WTC11 (cell line): ENCODE measurements at regions of chr16 and their contacts with region 1.

Region 1: GRCh38 chr16:69930117-69930776 is 20.9 kb upstream of the CLEC18A start:
- DNase-seq: peak; percentile 71
- ATAC-seq: peak; percentile 82
- H3K4me3 Mint-ChIP-seq: no peak overlapping the region
- H3K27ac Mint-ChIP-seq: no peak overlapping the region
- H3K4me1 Mint-ChIP-seq: peaks cover 26% of the 10 kb centered on the region
- H3K27me3 Mint-ChIP-seq: no peaks in the 10 kb centered on the region
- CTCF ChIP-seq: peak; percentile 78

Region 2: GRCh38 chr16:69223882-69224281 is 706.4 kb before region 1 on chr16:
- CTCF ChIA-PET with region 1: no interaction called
- POLR2A ChIA-PET with region 1: no interaction called
- DNase-seq: no peak
- ATAC-seq: no peak
- H3K4me3 Mint-ChIP-seq: no peak overlapping the region
- H3K27ac Mint-ChIP-seq: no peak overlapping the region
- H3K4me1 Mint-ChIP-seq: no peaks in the 10 kb centered on the region
- H3K27me3 Mint-ChIP-seq: no peaks in the 10 kb centered on the region
- CTCF ChIP-seq: no peak

Region 3: GRCh38 chr16:69796351-69797118 is 133.7 kb before region 1 on chr16:
- CTCF ChIA-PET with region 1: interaction called, 68 read pairs
- POLR2A ChIA-PET with region 1: no interaction called
- DNase-seq: no peak
- ATAC-seq: peak; percentile 91
- H3K4me3 Mint-ChIP-seq: peak overlapping the region; percentile 59
- H3K27ac Mint-ChIP-seq: no peak overlapping the region
- H3K4me1 Mint-ChIP-seq: peaks cover 3% of the 10 kb centered on the region; the same call in 1 of the 2 replicates
- H3K27me3 Mint-ChIP-seq: no peaks in the 10 kb centered on the region
- CTCF ChIP-seq: peak; percentile 85

Region 4: DNA sequence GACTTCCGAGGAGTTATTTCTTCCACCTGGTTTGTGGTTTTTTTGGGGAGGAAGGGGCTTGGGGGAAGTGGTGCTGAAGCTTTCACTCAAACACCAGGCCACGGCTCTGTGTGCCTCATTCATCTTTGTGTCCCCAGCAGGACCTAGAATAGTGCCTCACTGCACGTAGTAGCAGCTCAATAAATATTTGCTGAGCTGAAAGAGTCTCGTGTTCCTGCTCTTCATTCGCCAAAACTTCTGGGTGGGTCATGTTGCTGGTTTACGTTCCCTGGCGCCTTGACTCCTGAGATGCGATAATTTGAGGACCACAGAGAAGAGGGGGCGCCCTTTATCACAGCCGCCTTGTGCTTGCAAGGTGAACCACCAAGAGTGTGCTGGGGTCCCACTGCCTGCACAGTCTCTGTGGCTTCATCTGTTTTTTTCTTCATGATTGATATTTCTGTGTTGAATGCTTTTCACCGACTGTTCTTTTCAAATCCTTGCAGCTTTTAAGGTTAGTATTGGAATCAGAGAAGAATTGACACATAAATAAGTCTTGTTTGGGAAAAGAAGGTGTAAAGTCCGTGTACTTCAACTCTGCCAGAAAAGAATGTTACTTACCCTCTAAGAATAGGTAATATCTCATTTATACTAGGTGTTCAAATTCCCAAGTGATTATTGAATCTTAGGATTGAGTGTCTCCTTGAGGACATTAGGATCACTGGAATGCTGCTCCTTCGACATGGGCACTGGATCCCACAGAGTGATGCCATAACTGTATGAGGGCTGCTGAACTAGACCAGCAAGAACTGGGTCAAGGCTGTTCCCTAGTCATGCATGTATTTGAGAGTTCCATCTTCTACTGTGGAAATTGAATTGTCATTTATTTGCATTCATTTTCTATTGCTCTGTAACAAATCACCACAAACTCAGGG is 71.8 kb before region 1 on chr16:
- CTCF ChIA-PET with region 1: interaction called, 9 read pairs
- POLR2A ChIA-PET with region 1: interaction called, 12 read pairs
- DNase-seq: no peak
- ATAC-seq: no peak
- H3K4me3 Mint-ChIP-seq: no peak overlapping the region
- H3K27ac Mint-ChIP-seq: no peak overlapping the region; the same call in 1 of the 2 replicates
- H3K4me1 Mint-ChIP-seq: peaks cover 3% of the 10 kb centered on the region; the same call in 1 of the 2 replicates
- H3K27me3 Mint-ChIP-seq: no peaks in the 10 kb centered on the region
- CTCF ChIP-seq: no peak

Region 5: GRCh38 chr16:69870761-69871160 is 59.5 kb before region 1 on chr16:
- CTCF ChIA-PET with region 1: interaction called, 16 read pairs
- POLR2A ChIA-PET with region 1: no interaction called
- DNase-seq: no peak
- ATAC-seq: no peak
- H3K4me3 Mint-ChIP-seq: no peak overlapping the region
- H3K27ac Mint-ChIP-seq: no peak overlapping the region
- H3K4me1 Mint-ChIP-seq: no peaks in the 10 kb centered on the region
- H3K27me3 Mint-ChIP-seq: no peaks in the 10 kb centered on the region
- CTCF ChIP-seq: no peak

Region 6: GRCh38 chr16:69890114-69890891 is 39.9 kb before region 1 on chr16:
- CTCF ChIA-PET with region 1: interaction called, 10 read pairs
- POLR2A ChIA-PET with region 1: no interaction called
- DNase-seq: peak; percentile 44
- ATAC-seq: peak; percentile 95
- H3K4me3 Mint-ChIP-seq: no peak overlapping the region; the same call in 1 of the 2 replicates
- H3K27ac Mint-ChIP-seq: peak overlapping the region; percentile 97
- H3K4me1 Mint-ChIP-seq: peaks cover 16% of the 10 kb centered on the region
- H3K27me3 Mint-ChIP-seq: no peaks in the 10 kb centered on the region
- CTCF ChIP-seq: no peak